Heart left ventricle (tissue), 16 donors: ENCODE measurements at regions of chr3 and their contacts with region 1.

Region 1: GRCh38 chr3:189947948-189948723 is 172.6 kb downstream of the P3H2 start:
- DNase-seq: no peak
- ATAC-seq: no peak
- H3K4me3 ChIP-seq: no peak overlapping the region
- H3K27ac ChIP-seq: no peak overlapping the region
- H3K4me1 ChIP-seq: peaks cover 0 to 5% (median 0%) of the 10 kb centered on the region in 12 donors
- H3K27me3 ChIP-seq: peaks cover 0 to 8% (median 0%) of the 10 kb centered on the region in 9 donors
- CTCF ChIP-seq: peak; percentile 33 to 64 (median 48)
- POLR2A ChIP-seq: no peak

Region 2: GRCh38 chr3:189270248-189270832 is 677.8 kb before region 1 on chr3:
- intact Hi-C with region 1: loop called (anchors 2 to 5 kb)
- DNase-seq: peak in 4 of 5 donors; percentile 10 to 53 (median 44)
- ATAC-seq: peak; percentile 73 to 86 (median 81)
- H3K4me3 ChIP-seq: no peak overlapping the region
- H3K27ac ChIP-seq: no peak overlapping the region
- H3K4me1 ChIP-seq: peaks cover 0 to 3% (median 0%) of the 10 kb centered on the region in 12 donors
- H3K27me3 ChIP-seq: no peaks in the 10 kb centered on the region
- CTCF ChIP-seq: peak in 10 of 12 donors; percentile 19 to 54 (median 41)
- POLR2A ChIP-seq: no peak

Region 3: DNA sequence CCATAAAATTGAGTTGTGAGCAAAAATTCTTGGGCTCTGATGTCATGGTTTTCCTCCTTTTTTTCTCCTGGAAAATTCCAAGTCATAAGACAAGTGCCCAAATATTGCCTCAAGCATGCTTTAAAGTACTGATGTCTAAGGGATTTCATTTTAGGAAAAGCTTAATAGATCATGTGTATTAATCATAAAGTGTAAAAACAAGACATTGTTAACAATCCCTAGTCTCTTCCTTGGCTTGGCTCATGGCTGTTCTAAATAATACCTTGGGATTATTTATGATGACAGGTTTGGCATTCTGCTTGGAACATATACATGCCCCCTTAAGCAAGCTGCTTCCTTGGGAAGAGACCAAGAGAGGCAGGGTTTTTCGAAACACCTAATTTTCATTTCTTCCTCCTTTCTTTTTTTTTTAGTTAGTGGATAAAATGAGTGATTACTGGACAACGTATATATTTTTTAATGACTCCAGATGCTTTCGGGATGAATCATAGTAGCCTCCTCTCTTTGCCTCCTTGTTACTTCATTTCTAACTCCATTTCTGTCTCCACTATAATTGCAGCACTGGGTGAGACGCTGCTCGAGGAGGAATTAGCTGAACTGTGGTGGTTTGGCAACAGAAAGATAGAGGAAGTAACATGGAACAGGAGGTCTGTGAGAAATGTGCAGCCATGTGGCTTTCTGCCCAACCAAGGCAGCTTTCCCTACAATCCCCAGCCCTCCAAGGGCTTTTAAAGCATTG is 671.5 kb before region 1 on chr3:
- intact Hi-C with region 1: loop called in 8 of 10 experiments (anchors 2 to 5 kb)
- DNase-seq: peak in 3 of 5 donors; percentile 15 to 49 (median 35)
- ATAC-seq: peak; percentile 50 to 82 (median 72)
- H3K4me3 ChIP-seq: no peak overlapping the region
- H3K27ac ChIP-seq: no peak overlapping the region
- H3K4me1 ChIP-seq: peaks cover 0 to 20% (median 0%) of the 10 kb centered on the region in 12 donors
- H3K27me3 ChIP-seq: no peaks in the 10 kb centered on the region
- CTCF ChIP-seq: no peak
- POLR2A ChIP-seq: no peak